ENCODE measurements at regions of chr9 and their contacts with region 1.

Region 1: GRCh38 chr9:85645909-85646627 is 95.7 kb downstream of the AGTPBP1 start:
- DNase-seq: no peak
- ATAC-seq: no peak
- H3K4me3 Mint-ChIP-seq: no peak overlapping the region
- H3K27ac Mint-ChIP-seq: no peak overlapping the region
- H3K4me1 Mint-ChIP-seq: peaks cover 29% of the 10 kb centered on the region
- H3K27me3 Mint-ChIP-seq: no peaks in the 10 kb centered on the region
- CTCF ChIP-seq: no peak

Region 2: GRCh38 chr9:85662573-85662972 is 16.5 kb after region 1 on chr9:
- CTCF ChIA-PET with region 1: no interaction called
- POLR2A ChIA-PET with region 1: no interaction called
- intact Hi-C with region 1: loop called (anchors 2 kb)
- DNase-seq: no peak
- ATAC-seq: no peak
- H3K4me3 Mint-ChIP-seq: no peak overlapping the region
- H3K27ac Mint-ChIP-seq: no peak overlapping the region
- H3K4me1 Mint-ChIP-seq: no peaks in the 10 kb centered on the region
- H3K27me3 Mint-ChIP-seq: no peaks in the 10 kb centered on the region
- CTCF ChIP-seq: no peak